ENCODE measurements at regions of chr1 and their contacts with region 1.

Region 1: GRCh38 chr1:24735509-24736375 is 9.5 kb upstream of the CLIC4 start:
- DNase-seq: peak; percentile 20
- ATAC-seq: no peak
- H3K4me3 ChIP-seq: no peak overlapping the region
- H3K4me3 Mint-ChIP-seq: peak overlapping the region; percentile 68
- H3K27ac ChIP-seq: peak overlapping the region in 1 of 2 donors; percentile 32
- H3K27ac Mint-ChIP-seq: peak overlapping the region; percentile 83
- H3K4me1 ChIP-seq: peaks cover 42 to 70% of the 10 kb centered on the region in 2 donors
- H3K4me1 Mint-ChIP-seq: peaks cover 48% of the 10 kb centered on the region
- H3K27me3 ChIP-seq: no peaks in the 10 kb centered on the region
- H3K27me3 Mint-ChIP-seq: no peaks in the 10 kb centered on the region
- CTCF ChIP-seq: no peak

Region 2: GRCh38 chr1:24694380-24694843 is 41.3 kb before region 1 on chr1:
- CTCF ChIA-PET with region 1: interaction called, 22 read pairs
- POLR2A ChIA-PET with region 1: interaction called, 6 read pairs
- intact Hi-C with region 1: loop called (anchors 5 kb)
- DNase-seq: peak; percentile 32
- ATAC-seq: no peak
- H3K4me3 ChIP-seq: peak overlapping the region in 1 of 5 experiments; percentile 14
- H3K4me3 Mint-ChIP-seq: peak overlapping the region; percentile 70
- H3K27ac ChIP-seq: peak overlapping the region; percentile 60 to 71
- H3K27ac Mint-ChIP-seq: peak overlapping the region; percentile 71
- H3K4me1 ChIP-seq: peaks cover 30 to 32% of the 10 kb centered on the region in 2 donors
- H3K4me1 Mint-ChIP-seq: peaks cover 34% of the 10 kb centered on the region
- H3K27me3 ChIP-seq: no peaks in the 10 kb centered on the region
- H3K27me3 Mint-ChIP-seq: no peaks in the 10 kb centered on the region
- CTCF ChIP-seq: no peak

Measured in B cell (primary cell).